Mammary epithelial cell (primary cell): ENCODE measurements at regions of chr3 and their contacts with region 1.

Region 1: DNA sequence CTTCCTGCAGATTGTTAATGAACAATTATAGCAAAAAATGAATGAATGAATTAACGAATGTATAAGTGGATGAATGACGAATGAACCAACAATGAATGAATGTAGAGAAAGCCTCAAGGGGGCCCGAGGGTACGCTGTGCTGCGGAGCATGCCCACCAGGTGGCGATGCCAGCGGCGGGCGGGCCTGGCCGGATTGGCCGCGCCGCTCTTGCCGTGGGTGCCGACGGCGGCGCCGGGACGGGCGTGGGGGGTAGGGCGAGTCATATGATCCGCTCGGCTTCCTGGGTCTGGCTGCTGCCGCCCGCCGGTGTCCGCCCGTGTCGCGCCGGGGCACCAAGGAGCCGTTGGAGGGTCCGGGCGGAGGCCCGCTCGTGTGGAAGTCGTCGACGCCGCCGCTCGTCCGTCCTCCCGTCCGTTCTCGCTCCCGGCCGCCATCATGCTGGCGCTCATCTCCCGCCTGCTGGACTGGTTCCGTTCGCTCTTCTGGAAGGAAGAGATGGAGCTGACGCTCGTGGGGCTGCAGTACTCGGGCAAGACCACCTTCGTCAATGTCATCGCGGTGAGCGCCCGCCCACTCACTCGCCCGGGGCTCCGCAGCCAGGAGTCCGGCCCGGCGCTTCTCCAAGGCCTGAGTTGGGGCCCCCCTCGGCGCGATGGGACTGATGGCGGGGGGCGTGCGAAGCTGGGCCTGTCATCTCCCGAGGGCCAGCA is at the start of gene ARL8B:
- DNase-seq: peak; percentile 85
- H3K4me3 ChIP-seq: peak within 1 kb of the TSS; percentile 76 to 93 (median 93)
- H3K27ac ChIP-seq: peak within 1 kb of the TSS; percentile 89
- H3K4me1 ChIP-seq: peaks cover 23% of the 10 kb centered on the region
- H3K27me3 ChIP-seq: no peaks in the 10 kb centered on the region
- CTCF ChIP-seq: peak; percentile 94 to 95
- total RNA-seq, gene ARL8B: 60.7 to 77.8 TPM

Region 2: GRCh38 chr3:5187156-5187919 is 65.2 kb after region 1 on chr3 and contains the start of gene EDEM1:
- CTCF ChIA-PET with region 1: no interaction called
- dilution Hi-C with region 1: no loop called
- in situ Hi-C with region 1: loop called in 1 of 2 experiments (anchors 10 kb)
- intact Hi-C with region 1: loop called (anchors 1 kb)
- DNase-seq: peak; percentile 95
- H3K4me3 ChIP-seq: peak within 1 kb of the TSS; percentile 61 to 89 (median 86)
- H3K27ac ChIP-seq: peak within 1 kb of the TSS; percentile 94
- H3K4me1 ChIP-seq: peaks cover 11% of the 10 kb centered on the region
- H3K27me3 ChIP-seq: no peaks in the 10 kb centered on the region
- CTCF ChIP-seq: no peak
- total RNA-seq, gene EDEM1: 78.0 to 98.0 TPM

Region 3: DNA sequence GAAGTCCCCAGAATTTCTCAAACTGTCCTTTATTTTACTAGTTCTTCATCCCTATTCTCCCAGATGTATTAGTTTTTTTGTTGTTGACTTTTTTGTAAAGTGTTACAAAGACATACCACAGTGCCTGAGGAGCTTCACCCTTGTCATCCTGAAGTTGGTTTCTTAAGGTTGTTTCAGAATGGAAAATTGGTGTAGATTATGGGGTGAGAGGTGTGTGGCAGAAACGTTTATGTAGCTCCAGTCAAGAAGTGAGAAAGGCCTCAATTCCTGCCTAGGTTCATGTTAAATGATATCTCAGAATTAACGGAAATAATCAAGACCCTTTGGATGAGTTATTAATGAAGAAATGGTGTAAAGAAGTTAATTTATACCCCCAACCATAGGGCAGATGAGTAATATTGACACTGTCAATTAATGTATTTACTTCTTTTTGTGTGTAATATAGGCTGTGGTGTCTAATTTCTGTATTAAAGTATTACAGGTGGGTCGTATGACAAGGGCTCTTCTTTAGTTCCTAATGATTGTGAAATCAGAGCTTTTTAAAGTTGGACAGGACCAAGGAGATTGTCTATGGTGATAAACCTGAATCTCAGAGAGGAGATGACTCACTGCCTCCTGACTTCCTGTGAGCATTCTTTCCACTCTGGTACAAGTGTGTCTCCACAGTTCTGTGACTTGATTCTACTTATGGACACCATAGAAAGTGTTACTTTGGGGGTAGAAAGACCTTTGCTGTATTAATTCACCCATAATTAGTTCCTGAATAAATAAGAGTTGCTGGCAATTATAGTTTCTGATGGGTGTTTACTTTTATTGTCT is 72.4 kb after region 1 on chr3:
- CTCF ChIA-PET with region 1: interaction called, 3 read pairs
- dilution Hi-C with region 1: no loop called
- in situ Hi-C with region 1: loop called (anchors 5 to 10 kb)
- intact Hi-C with region 1: loop called (anchors 1 kb)
- DNase-seq: peak; percentile 90
- H3K4me3 ChIP-seq: peak overlapping the region in 1 of 3 experiments; percentile 3
- H3K27ac ChIP-seq: peak overlapping the region; percentile 95
- H3K4me1 ChIP-seq: peaks cover 69% of the 10 kb centered on the region
- H3K27me3 ChIP-seq: no peaks in the 10 kb centered on the region
- CTCF ChIP-seq: no peak